HepG2 (cell line): ENCODE measurements at regions of chr6 and their contacts with region 1.

Region 1: DNA sequence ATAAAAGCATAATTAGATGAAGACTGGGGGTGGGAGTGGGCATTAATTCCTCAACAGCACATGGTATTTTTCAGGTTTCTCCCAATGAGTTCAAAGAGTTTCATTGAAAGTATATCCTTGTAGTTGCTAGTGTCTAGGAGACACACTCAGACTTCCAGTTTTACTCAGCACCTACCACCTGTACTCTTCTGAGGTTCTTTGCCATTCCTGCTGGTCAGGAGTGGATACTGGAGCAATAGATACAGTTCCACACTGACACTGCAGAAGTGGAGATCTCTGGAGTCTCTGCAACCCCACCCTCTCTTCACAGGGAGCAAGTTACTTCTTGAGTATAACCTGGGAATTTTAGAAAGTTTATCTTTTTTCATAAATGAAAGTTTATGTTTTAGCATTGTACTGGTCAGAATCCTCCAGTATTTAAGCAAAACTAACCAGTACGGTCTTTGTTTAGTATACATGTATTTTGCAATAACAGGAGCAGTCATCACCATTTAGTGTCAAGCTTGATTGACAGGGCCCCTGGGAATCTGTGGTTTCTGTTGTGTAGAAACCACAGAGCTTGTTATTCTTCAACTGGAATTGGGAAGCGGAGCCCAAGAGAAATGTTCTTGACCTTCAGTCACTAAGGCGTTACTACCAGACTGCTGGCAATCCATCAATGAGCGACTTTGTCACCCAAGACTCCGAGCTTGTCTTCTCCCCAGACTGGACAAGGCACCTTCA is 148.1 kb downstream of the ZDHHC14 start:
- DNase-seq: peak; percentile 73
- ATAC-seq: no peak
- H3K4me3 ChIP-seq: no peak overlapping the region
- H3K27ac ChIP-seq: peak overlapping the region; percentile 96
- H3K4me1 ChIP-seq: peaks cover 94% of the 10 kb centered on the region
- H3K27me3 ChIP-seq: no peaks in the 10 kb centered on the region
- CTCF ChIP-seq: no peak
- EP300 ChIP-seq: peak in 1 of 2 experiments; percentile 51; a peak in 1 of 4 replicates
- POLR2A ChIP-seq: no peak
- RAD21 ChIP-seq: no peak

Region 2: GRCh38 chr6:157099912-157100593 is 429.0 kb before region 1 on chr6:
- CTCF ChIA-PET with region 1: no interaction called
- POLR2A ChIA-PET with region 1: no interaction called
- in situ Hi-C with region 1: no loop called
- intact Hi-C with region 1: no loop called
- DNase-seq: no peak
- ATAC-seq: no peak
- H3K4me3 ChIP-seq: no peak overlapping the region
- H3K27ac ChIP-seq: no peak overlapping the region
- H3K4me1 ChIP-seq: peaks cover 17% of the 10 kb centered on the region
- H3K27me3 ChIP-seq: no peaks in the 10 kb centered on the region
- CTCF ChIP-seq: no peak
- EP300 ChIP-seq: no peak
- POLR2A ChIP-seq: no peak
- RAD21 ChIP-seq: no peak

Region 3: GRCh38 chr6:157309321-157309720 is 219.8 kb before region 1 on chr6:
- CTCF ChIA-PET with region 1: no interaction called
- POLR2A ChIA-PET with region 1: no interaction called
- in situ Hi-C with region 1: no loop called
- intact Hi-C with region 1: no loop called
- DNase-seq: no peak
- ATAC-seq: no peak
- H3K4me3 ChIP-seq: no peak overlapping the region
- H3K27ac ChIP-seq: no peak overlapping the region
- H3K4me1 ChIP-seq: no peaks in the 10 kb centered on the region
- H3K27me3 ChIP-seq: no peaks in the 10 kb centered on the region
- CTCF ChIP-seq: no peak
- EP300 ChIP-seq: no peak
- POLR2A ChIP-seq: no peak
- RAD21 ChIP-seq: no peak

Region 4: DNA sequence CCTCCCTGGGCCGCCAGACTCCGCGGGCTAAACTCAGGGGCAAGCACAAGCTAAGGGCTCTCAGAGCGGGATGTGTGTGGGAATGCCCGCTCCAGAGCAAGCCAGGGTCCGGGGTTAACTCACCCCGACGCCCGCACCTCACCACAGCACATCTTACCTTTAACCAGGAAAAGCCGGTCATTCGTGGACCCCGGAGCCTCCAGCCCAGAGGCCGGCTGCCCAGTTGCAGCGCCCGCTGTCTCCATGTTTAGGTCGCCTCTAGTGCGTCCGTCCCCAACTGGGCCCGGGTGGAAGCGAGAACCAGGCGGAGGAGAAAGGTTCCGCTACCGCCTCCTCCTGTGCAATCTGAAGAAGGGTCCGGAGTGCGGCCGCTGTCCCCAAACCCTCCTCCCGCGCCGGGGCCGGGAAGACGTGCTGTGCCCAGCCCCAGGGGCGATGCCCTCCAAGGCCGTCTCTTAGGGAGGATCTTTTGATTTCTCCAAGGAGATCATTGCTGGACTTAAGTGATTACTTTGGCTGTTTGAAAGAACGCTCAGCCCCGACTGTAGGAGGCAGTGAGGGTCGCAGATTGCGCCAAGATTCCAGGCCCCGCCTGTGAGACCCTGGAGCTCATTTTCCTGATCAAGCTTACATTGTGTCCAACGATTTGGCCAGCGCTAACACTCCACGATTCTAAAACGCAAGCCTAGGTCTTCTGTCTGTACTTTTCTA is 205.7 kb before region 1 on chr6 and contains the start of gene TMEM242:
- CTCF ChIA-PET with region 1: no interaction called
- POLR2A ChIA-PET with region 1: interaction called, 73 read pairs
- in situ Hi-C with region 1: no loop called
- intact Hi-C with region 1: loop called (anchors 5 kb)
- DNase-seq: peak; percentile 89
- ATAC-seq: peak; percentile 94
- H3K4me3 ChIP-seq: peak within 1 kb of the TSS; percentile 94 to 96 (median 96)
- H3K27ac ChIP-seq: peak within 1 kb of the TSS; percentile 90
- H3K4me1 ChIP-seq: peaks cover 52% of the 10 kb centered on the region
- H3K27me3 ChIP-seq: no peaks in the 10 kb centered on the region; a peak in 2 of 5 replicates
- CTCF ChIP-seq: peak; percentile 42; the same call in 1 of the 2 replicates
- EP300 ChIP-seq: peak; percentile 80 to 85; a peak in 3 of 4 replicates
- POLR2A ChIP-seq: peak; percentile 96 to 97
- RAD21 ChIP-seq: peak; percentile 71
- total RNA-seq, gene TMEM242: 6.4 and 11.1 TPM in 2 replicates

Region 5: DNA sequence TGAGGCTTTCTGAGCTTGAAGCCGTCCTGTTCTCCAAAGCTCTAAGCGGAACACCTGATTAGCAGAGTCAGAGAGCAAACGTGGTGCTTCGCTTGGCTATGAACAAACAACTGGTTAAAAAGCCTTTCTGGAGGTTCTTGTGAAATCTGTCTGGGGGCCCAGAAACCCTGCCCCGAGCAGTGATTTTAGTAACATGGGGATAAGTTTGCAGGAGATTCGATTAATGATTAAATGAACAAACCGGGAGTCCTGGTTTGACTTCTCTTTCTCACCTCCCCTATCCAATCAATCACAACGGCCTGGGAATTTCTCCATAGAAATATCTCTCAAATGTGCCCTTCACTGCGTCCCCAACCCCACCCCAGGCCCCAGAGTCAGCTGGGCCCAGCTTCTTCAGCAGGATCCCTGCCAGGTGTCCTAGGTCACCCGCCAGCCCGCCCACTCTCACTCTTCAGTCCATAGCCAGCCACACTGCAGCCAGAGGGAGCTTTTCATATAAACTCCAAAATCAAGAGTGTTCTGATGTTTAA is 104.5 kb before region 1 on chr6:
- CTCF ChIA-PET with region 1: no interaction called
- POLR2A ChIA-PET with region 1: interaction called, 13 read pairs
- in situ Hi-C with region 1: no loop called
- intact Hi-C with region 1: no loop called
- DNase-seq: peak; percentile 86
- ATAC-seq: peak; percentile 87
- H3K4me3 ChIP-seq: peak overlapping the region; percentile 17 to 44 (median 24); a peak in 5 of 6 replicates
- H3K27ac ChIP-seq: peak overlapping the region; percentile 56
- H3K4me1 ChIP-seq: peaks cover 25% of the 10 kb centered on the region
- H3K27me3 ChIP-seq: no peaks in the 10 kb centered on the region
- CTCF ChIP-seq: peak; percentile 30
- EP300 ChIP-seq: peak in 1 of 2 experiments; percentile 68; a peak in 2 of 4 replicates
- POLR2A ChIP-seq: no peak
- RAD21 ChIP-seq: no peak

Region 6: DNA sequence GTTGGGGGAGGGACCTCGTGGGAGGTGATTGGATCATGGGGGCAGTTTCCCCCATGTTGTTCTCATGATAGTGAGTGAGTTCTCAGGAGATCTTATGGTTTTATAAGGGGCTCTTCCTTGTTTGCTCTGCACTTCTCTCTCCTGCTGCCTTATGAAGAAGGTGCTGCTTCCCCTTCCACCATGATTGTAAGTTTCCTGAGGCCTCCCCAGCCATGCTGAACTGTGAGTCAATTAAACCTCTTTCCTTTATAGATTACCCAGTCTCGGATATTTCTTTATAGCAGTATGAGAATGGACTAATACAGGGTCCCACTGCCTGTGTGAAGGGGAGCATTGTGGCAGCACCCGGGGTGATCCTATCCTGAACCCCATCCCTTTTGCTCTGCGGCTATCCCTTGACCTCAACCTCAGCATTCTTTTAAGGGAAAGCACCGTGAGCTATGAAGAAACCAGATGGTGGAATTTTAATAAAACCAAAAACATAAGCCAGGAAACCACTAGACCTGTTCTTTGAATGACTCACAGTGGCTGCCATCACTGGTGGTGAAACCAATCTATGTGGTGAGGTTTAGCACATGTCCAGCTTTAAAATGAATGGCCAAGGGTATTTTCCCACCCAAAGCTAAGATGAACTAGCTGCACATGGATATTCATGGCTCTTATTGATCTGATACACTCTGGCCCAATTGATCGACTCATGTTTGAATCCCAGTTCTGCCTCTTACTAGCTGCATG is 85.9 kb before region 1 on chr6:
- CTCF ChIA-PET with region 1: no interaction called
- POLR2A ChIA-PET with region 1: no interaction called
- in situ Hi-C with region 1: no loop called
- intact Hi-C with region 1: no loop called
- DNase-seq: no peak
- ATAC-seq: no peak
- H3K4me3 ChIP-seq: no peak overlapping the region
- H3K27ac ChIP-seq: no peak overlapping the region
- H3K4me1 ChIP-seq: no peaks in the 10 kb centered on the region
- H3K27me3 ChIP-seq: no peaks in the 10 kb centered on the region
- CTCF ChIP-seq: no peak
- EP300 ChIP-seq: no peak
- POLR2A ChIP-seq: no peak
- RAD21 ChIP-seq: no peak

Region 7: GRCh38 chr6:157461000-157461915 is 67.8 kb before region 1 on chr6:
- CTCF ChIA-PET with region 1: no interaction called
- POLR2A ChIA-PET with region 1: no interaction called
- in situ Hi-C with region 1: no loop called
- intact Hi-C with region 1: loop called (anchors 2 kb)
- DNase-seq: peak; percentile 67
- ATAC-seq: peak; percentile 78
- H3K4me3 ChIP-seq: no peak overlapping the region; a peak in 1 of 6 replicates
- H3K27ac ChIP-seq: peak overlapping the region; percentile 30
- H3K4me1 ChIP-seq: peaks cover 19% of the 10 kb centered on the region
- H3K27me3 ChIP-seq: no peaks in the 10 kb centered on the region
- CTCF ChIP-seq: peak; percentile 43
- EP300 ChIP-seq: no peak
- POLR2A ChIP-seq: no peak
- RAD21 ChIP-seq: peak; percentile 42; the same call in 1 of the 2 replicates

Region 8: GRCh38 chr6:157571269-157571668 is 42.2 kb after region 1 on chr6:
- CTCF ChIA-PET with region 1: no interaction called
- POLR2A ChIA-PET with region 1: interaction called, 13 read pairs
- in situ Hi-C with region 1: no loop called
- intact Hi-C with region 1: no loop called
- DNase-seq: no peak
- ATAC-seq: peak; percentile 48; the same call in 2 of the 3 replicates
- H3K4me3 ChIP-seq: no peak overlapping the region
- H3K27ac ChIP-seq: peak overlapping the region; percentile 6
- H3K4me1 ChIP-seq: peaks cover 24% of the 10 kb centered on the region
- H3K27me3 ChIP-seq: no peaks in the 10 kb centered on the region
- CTCF ChIP-seq: no peak
- EP300 ChIP-seq: no peak
- POLR2A ChIP-seq: no peak
- RAD21 ChIP-seq: no peak

Region 9: DNA sequence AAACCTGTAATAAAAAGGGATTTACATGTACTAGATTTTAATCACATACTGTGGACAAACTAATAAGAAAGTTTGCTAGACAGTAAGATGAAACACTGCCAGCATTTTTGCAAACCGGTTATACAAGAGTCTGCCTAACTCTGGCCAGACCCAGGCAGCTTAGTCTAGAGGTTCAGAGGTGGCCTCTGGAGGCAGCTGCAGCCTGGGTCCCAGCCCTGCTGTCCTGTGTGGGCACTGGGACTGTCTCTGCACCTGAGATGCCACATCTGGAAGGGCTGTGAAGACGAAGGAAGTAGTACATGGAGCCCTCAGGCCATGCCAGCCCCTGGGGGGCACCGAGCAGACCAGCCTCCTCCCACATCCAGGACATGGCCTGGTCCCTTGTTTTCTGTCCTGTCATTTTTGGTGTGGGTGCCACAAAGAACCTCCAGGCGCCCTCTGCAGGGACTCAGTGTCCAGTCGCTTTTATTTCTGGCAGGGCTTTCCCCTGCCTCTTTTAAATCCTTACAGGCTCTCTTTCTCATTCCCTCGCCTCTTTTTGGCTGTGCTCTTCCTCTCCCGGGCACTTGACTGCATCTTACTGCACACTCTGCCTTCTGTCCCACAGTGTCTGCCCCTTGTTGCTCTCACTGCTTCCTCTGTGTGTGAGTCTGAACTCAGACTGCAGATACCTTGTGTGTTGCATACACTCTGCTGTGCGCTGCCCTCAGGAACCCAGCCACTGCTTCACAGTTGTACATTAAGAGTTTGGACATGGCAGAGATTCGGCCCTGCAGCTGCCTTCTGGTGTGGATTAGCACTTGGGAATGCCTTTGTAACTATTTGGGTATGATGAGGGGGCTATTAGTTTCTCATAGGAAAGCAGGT is 68.6 kb after region 1 on chr6:
- CTCF ChIA-PET with region 1: no interaction called
- POLR2A ChIA-PET with region 1: interaction called, 4 read pairs
- in situ Hi-C with region 1: no loop called
- intact Hi-C with region 1: loop called (anchors 2 kb)
- DNase-seq: peak; percentile 56
- ATAC-seq: peak; percentile 90
- H3K4me3 ChIP-seq: no peak overlapping the region
- H3K27ac ChIP-seq: no peak overlapping the region
- H3K4me1 ChIP-seq: peaks cover 9% of the 10 kb centered on the region; the same call in 1 of the 2 replicates
- H3K27me3 ChIP-seq: no peaks in the 10 kb centered on the region
- CTCF ChIP-seq: peak; percentile 90
- EP300 ChIP-seq: no peak
- POLR2A ChIP-seq: no peak
- RAD21 ChIP-seq: peak; percentile 94

Region 10: GRCh38 chr6:157800420-157801237 is 271.5 kb after region 1 on chr6:
- CTCF ChIA-PET with region 1: no interaction called
- POLR2A ChIA-PET with region 1: no interaction called
- in situ Hi-C with region 1: no loop called
- intact Hi-C with region 1: no loop called
- DNase-seq: no peak
- ATAC-seq: no peak
- H3K4me3 ChIP-seq: no peak overlapping the region
- H3K27ac ChIP-seq: no peak overlapping the region
- H3K4me1 ChIP-seq: no peaks in the 10 kb centered on the region
- H3K27me3 ChIP-seq: peaks cover 1 to 11% of the 10 kb centered on the region in 2 experiments; a peak in 2 of 5 replicates
- CTCF ChIP-seq: no peak
- EP300 ChIP-seq: no peak
- POLR2A ChIP-seq: no peak
- RAD21 ChIP-seq: no peak